ENCODE measurements at regions of chr19 and their contacts with region 1.

Region 1: GRCh38 chr19:48391107-48391986 is at the start of gene KDELR1:
- DNase-seq: peak; percentile 77
- ATAC-seq: peak; percentile 79
- H3K4me3 Mint-ChIP-seq: peak within 1 kb of the TSS; percentile 93
- H3K27ac Mint-ChIP-seq: peak within 1 kb of the TSS; percentile 92
- H3K4me1 Mint-ChIP-seq: peaks cover 21% of the 10 kb centered on the region
- H3K27me3 Mint-ChIP-seq: peaks cover 32% of the 10 kb centered on the region
- total RNA-seq, gene KDELR1: 64.8 to 72.2 TPM

Region 2: DNA sequence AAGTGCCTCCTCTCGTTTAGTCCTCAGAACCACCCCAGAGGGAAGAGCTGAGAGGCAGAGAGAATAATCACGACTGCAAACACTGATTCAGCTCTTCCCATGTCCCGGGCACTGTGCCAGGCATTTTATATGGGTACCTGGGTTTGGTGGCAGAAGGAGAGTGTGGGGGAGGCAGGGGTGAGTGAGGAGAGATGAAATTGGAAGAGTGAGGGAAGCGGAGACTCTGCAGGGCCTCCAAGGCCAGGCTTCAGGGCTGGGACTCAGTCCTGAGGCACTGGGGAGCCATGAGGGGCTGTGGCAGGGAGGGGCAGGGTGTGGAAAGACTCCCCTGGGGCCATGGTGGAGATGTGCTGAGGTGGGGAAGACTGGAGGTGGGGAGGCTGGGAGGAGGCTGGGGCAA is 18.4 kb before region 1 on chr19:
- CTCF ChIA-PET with region 1: interaction called, 13 read pairs
- DNase-seq: no peak
- ATAC-seq: no peak
- H3K4me3 Mint-ChIP-seq: no peak overlapping the region
- H3K27ac Mint-ChIP-seq: no peak overlapping the region
- H3K4me1 Mint-ChIP-seq: no peaks in the 10 kb centered on the region
- H3K27me3 Mint-ChIP-seq: no peaks in the 10 kb centered on the region

Region 3: DNA sequence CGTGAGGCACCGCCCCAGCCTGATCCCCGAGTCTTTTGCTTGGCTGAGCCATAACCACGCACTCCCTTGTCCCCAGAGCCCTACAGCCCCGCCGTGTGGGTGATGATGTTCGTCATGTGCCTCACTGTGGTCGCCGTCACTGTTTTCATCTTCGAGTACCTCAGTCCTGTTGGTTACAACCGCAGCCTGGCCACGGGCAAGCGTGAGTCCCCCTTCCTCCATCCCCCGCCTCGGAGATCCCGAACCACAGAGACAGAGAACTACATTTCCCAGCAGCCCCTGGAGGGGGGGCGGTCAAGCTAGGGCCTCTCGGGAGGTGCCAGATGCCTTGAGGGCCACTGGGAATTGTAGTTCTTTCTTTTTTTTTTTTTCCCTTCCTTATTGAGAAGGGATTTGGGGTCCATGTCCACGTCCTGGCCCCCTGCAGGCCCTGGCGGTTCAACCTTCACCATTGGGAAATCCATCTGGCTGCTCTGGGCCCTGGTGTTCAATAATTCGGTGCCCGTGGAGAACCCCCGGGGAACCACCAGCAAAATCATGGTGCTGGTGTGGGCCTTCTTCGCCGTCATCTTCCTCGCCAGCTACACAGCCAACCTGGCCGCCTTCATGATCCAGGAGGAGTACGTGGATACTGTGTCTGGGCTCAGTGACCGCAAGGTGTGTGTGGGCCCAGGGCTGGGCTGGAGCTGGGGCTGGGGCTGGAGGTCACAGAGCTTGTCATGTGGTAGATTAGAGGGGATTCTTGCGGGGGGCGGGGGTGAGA is 28.0 kb after region 1 on chr19:
- CTCF ChIA-PET with region 1: interaction called, 16 read pairs
- DNase-seq: peak; percentile 90
- ATAC-seq: peak; percentile 86
- H3K4me3 Mint-ChIP-seq: peak overlapping the region; percentile 74
- H3K27ac Mint-ChIP-seq: peak overlapping the region; percentile 89
- H3K4me1 Mint-ChIP-seq: peaks cover 35% of the 10 kb centered on the region
- H3K27me3 Mint-ChIP-seq: peaks cover 25% of the 10 kb centered on the region

Region 4: DNA sequence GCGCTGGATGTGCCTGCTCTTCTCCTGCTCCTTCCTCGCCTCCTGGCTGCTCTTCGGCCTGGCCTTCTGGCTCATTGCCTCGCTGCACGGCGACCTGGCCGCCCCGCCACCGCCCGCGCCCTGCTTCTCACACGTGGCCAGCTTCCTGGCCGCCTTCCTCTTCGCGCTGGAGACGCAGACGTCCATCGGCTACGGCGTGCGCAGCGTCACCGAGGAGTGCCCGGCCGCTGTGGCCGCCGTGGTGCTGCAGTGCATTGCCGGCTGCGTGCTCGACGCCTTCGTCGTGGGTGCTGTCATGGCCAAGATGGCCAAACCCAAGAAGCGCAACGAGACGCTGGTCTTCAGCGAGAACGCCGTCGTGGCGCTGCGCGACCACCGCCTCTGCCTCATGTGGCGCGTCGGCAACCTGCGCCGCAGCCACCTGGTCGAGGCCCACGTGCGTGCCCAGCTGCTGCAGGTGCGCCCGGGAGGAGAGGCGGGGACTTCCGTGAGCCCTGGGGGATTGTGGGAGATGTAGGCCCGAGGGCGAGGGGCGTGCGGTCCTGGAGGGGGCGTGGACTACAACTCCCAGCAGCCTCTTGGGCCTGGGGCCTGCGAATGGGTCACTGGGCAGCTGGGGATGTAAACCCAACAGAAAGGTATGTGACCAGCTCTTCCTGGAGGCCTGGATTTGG is 70.8 kb after region 1 on chr19:
- CTCF ChIA-PET with region 1: no interaction called
- DNase-seq: no peak
- ATAC-seq: no peak
- H3K4me3 Mint-ChIP-seq: no peak overlapping the region
- H3K27ac Mint-ChIP-seq: no peak overlapping the region
- H3K4me1 Mint-ChIP-seq: peaks cover 15% of the 10 kb centered on the region
- H3K27me3 Mint-ChIP-seq: no peaks in the 10 kb centered on the region